Left colon (tissue), 2 donors: ENCODE measurements at regions of chr2 and their contacts with region 1.

Region 1: GRCh38 chr2:174682578-174683391 is 81.5 kb downstream of the CHRNA1 start:
- DNase-seq: peak; percentile 42 to 64
- ATAC-seq: peak; percentile 76

Region 2: DNA sequence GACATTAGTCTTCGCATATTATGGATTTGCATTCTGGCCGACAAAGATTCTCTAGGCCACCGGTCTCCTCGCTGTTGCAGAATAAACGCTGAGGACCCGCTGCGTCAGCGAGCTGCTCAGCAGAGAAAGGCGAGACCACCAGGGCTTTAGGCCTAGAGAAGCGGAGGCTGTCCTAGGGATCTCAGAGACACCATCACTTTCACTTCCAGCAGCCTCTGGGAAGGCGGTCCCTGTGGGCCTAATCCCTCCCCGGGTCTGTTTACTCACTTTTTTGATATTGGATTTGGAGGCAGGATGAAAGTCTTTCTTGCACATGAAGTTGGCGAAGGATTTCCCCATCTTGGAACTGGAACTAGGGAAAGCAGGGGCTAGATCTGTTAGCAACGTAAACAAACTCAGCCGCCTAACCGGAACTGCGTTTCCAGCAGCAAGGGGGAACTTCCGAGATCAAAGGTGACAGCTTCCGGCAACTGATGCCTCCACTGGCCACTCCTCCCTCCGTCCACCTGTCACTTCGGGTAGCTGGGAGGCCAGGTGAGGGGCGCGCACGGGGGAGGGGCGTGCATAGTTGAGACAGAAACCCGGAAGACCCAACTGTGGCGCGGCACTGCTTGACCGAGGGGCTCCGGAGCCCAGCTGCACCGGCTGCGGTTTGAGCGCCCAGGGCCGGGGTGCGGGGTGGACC is 287.4 kb before region 1 on chr2 and contains the start of gene SCRN3:
- intact Hi-C with region 1: no loop called
- DNase-seq: peak; percentile 87 to 89
- ATAC-seq: peak; percentile 94
- total RNA-seq, gene SCRN3: 25.7 to 26.7 TPM

Region 3: GRCh38 chr2:174495350-174496012 is 187.3 kb before region 1 on chr2:
- intact Hi-C with region 1: no loop called
- DNase-seq: no peak
- ATAC-seq: no peak

Region 4: GRCh38 chr2:174577967-174578589 is 104.7 kb before region 1 on chr2:
- intact Hi-C with region 1: loop called in 1 of 2 experiments (anchors 10 kb)
- DNase-seq: no peak
- ATAC-seq: no peak